ENCODE measurements at regions of chrX and their contacts with region 1.

Region 1: DNA sequence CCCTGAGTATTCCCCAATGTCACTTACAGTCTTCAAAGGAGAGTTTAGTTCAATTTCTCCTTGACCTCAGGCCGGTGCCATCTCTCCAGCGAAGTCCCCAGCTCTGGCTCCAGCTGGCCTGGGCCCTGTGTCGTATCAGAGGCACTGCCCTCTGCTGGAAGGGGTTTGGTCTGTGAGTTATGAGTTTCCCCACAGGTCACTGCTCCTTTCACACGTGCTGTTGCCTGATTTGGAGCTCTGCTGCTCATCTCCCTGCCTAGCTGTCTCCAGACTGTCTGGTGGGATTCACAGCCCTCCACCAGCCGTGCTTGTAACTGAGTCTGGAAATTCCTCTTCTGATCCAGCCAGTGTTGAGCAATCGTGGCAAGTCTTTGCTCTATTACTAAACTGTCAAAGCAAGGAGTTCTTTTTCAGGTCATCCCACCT is at the start of gene RAP2C:
- DNase-seq: peak; percentile 15 to 50 (median 32)
- ATAC-seq: peak; percentile 47
- H3K4me3 ChIP-seq: peak within 1 kb of the TSS; percentile 51
- H3K4me3 Mint-ChIP-seq: peak within 1 kb of the TSS; percentile 79 to 96 (median 88)
- H3K27ac ChIP-seq: peak within 1 kb of the TSS; percentile 94
- H3K27ac Mint-ChIP-seq: peak within 1 kb of the TSS; percentile 87 to 97 (median 94)
- H3K4me1 ChIP-seq: peaks cover 9 to 14% of the 10 kb centered on the region in 2 donors
- H3K4me1 Mint-ChIP-seq: peaks cover 7 to 35% (median 25%) of the 10 kb centered on the region in 7 donors
- H3K27me3 ChIP-seq: no peaks in the 10 kb centered on the region
- H3K27me3 Mint-ChIP-seq: no peaks in the 10 kb centered on the region
- total RNA-seq, gene RAP2C: 21.4 to 34.7 (median 30.3) TPM

Region 2: DNA sequence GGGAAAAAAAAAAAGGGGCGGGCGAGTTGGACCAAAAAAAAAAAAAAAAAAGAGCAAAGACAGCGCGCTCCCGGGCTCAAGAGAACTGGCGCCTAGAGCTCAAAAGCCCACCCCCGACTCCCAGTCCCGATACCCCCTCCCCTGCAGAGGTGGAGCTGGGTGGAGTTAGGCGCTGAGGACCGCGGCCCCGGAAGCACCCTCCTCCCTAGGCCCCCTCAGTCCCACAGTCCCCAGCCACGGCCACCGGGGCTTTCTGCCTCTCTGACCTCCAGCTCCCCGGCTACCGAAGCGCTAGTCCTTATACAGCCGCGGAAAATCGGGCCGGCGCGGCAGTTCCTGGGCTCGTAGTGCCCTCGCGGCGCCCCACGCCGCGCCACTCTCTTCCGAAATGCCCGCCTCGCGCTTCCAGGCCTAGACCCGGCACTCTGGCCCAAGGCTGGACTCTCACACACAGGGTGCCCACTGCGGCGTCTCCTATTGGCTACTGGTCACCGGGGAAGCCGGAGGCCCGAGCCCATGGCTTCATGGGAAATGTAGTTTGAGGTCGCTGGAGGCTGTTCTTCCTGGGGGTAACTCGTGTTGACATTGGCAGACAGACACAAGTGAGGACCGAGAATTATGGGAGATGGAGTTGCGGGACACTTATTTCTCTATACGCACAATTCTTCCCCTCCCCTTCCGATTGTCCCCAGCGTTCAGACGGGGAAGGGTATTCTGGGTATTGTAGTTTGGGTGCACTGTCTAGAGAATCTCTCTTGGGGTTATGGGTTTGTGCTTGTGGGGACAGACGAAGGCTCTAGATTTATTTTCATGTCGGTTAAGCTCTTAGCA is 1316.4 kb before region 1 on chrX and contains the start of gene ENOX2:
- CTCF ChIA-PET with region 1: no interaction called
- POLR2A ChIA-PET with region 1: interaction called, 4 read pairs
- intact Hi-C with region 1: loop called in 1 of 2 experiments (anchors 5 kb)
- DNase-seq: peak; percentile 51 to 90 (median 83)
- ATAC-seq: peak; percentile 98
- H3K4me3 ChIP-seq: peak within 1 kb of the TSS; percentile 79
- H3K4me3 Mint-ChIP-seq: no peak within 1 kb of the TSS
- H3K27ac ChIP-seq: peak within 1 kb of the TSS; percentile 93
- H3K27ac Mint-ChIP-seq: peak within 1 kb of the TSS in 6 of 9 donors; percentile 51 to 91 (median 71)
- H3K4me1 ChIP-seq: peaks cover 0 to 5% of the 10 kb centered on the region in 2 donors
- H3K4me1 Mint-ChIP-seq: peaks cover 5 to 14% (median 12%) of the 10 kb centered on the region in 7 donors
- H3K27me3 ChIP-seq: no peaks in the 10 kb centered on the region
- H3K27me3 Mint-ChIP-seq: no peaks in the 10 kb centered on the region
- total RNA-seq, gene ENOX2: 10.3 to 15.3 (median 12.1) TPM

Region 3: GRCh38 chrX:131830400-131831184 is 388.8 kb before region 1 on chrX:
- CTCF ChIA-PET with region 1: interaction called, 3 read pairs
- POLR2A ChIA-PET with region 1: no interaction called
- intact Hi-C with region 1: loop called (anchors 2 kb)
- DNase-seq: peak in 8 of 9 donors; percentile 59 to 83 (median 72)
- ATAC-seq: peak; percentile 76
- H3K4me3 ChIP-seq: peak overlapping the region; percentile 37
- H3K4me3 Mint-ChIP-seq: peak overlapping the region; percentile 61 to 90 (median 72)
- H3K27ac ChIP-seq: peak overlapping the region; percentile 55
- H3K27ac Mint-ChIP-seq: peak overlapping the region; percentile 42 to 91 (median 81)
- H3K4me1 ChIP-seq: peaks cover 0 to 14% of the 10 kb centered on the region in 2 donors
- H3K4me1 Mint-ChIP-seq: peaks cover 1 to 44% (median 35%) of the 10 kb centered on the region in 7 donors
- H3K27me3 ChIP-seq: no peaks in the 10 kb centered on the region
- H3K27me3 Mint-ChIP-seq: no peaks in the 10 kb centered on the region

Region 4: GRCh38 chrX:131854581-131854980 is 364.8 kb before region 1 on chrX:
- CTCF ChIA-PET with region 1: interaction called, 9 read pairs
- POLR2A ChIA-PET with region 1: no interaction called
- intact Hi-C with region 1: loop called in 1 of 2 experiments (anchors 1 kb)
- DNase-seq: peak in 5 of 9 donors; percentile 25 to 48 (median 36)
- ATAC-seq: no peak
- H3K4me3 ChIP-seq: no peak overlapping the region
- H3K4me3 Mint-ChIP-seq: no peak overlapping the region
- H3K27ac ChIP-seq: no peak overlapping the region
- H3K27ac Mint-ChIP-seq: peak overlapping the region in 1 of 9 donors; percentile 70
- H3K4me1 ChIP-seq: no peaks in the 10 kb centered on the region
- H3K4me1 Mint-ChIP-seq: no peaks in the 10 kb centered on the region
- H3K27me3 ChIP-seq: no peaks in the 10 kb centered on the region
- H3K27me3 Mint-ChIP-seq: no peaks in the 10 kb centered on the region

Region 5: DNA sequence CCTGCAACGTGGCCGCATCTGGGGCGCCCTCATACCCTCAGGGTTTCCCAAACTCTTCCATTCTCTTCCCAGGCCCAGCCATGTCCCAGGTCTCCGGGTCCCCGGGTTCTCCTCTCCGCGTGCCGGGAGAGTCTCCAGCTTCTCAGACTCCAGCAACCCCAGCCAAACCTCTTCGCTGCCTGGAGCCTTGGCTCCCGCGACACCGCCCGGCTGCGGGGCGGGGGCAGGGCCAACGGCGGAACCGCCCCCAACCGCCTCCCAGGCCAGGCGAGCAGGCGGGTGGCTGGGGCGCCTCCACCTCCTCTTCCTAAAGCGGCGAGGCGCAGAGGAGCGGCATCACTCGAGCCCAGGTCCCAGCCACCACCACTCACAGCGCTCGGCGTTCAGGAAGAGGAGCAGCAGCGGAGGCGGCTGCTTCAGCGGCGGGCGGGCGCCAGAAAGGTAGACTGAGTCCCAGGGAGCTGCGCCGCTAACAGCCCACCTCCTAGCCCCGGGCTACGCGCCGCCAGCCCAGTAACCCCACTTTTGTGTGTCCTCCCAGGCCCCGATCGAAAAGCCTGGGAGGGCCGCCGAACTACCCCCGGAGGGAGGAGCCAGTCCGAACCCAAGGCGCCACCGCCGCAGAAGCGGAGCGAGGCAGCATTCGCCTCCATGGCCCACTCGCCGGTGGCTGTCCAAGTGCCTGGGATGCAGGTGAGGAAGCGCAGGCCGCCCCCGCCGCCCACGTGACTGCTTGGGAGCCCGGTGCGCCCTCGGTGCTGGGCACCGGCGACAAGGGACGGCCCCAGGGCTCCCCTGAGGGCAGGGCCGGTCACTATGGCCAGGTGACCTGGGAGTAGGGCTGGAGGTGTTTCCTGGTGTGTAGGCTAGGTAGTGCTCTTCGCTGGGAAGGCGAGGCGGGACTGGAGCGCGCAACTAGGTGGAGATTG is 196.1 kb before region 1 on chrX and contains the start of gene STK26:
- CTCF ChIA-PET with region 1: interaction called, 5 read pairs
- POLR2A ChIA-PET with region 1: interaction called, 6 read pairs
- intact Hi-C with region 1: loop called (anchors 1 kb)
- DNase-seq: peak; percentile 55 to 83 (median 78)
- ATAC-seq: peak; percentile 93
- H3K4me3 ChIP-seq: peak within 1 kb of the TSS; percentile 72
- H3K4me3 Mint-ChIP-seq: peak within 1 kb of the TSS; percentile 90 to 98 (median 94)
- H3K27ac ChIP-seq: peak within 1 kb of the TSS; percentile 86
- H3K27ac Mint-ChIP-seq: peak within 1 kb of the TSS; percentile 71 to 95 (median 93)
- H3K4me1 ChIP-seq: peaks cover 15 to 19% of the 10 kb centered on the region in 2 donors
- H3K4me1 Mint-ChIP-seq: peaks cover 17 to 43% (median 39%) of the 10 kb centered on the region in 7 donors
- H3K27me3 ChIP-seq: no peaks in the 10 kb centered on the region
- H3K27me3 Mint-ChIP-seq: no peaks in the 10 kb centered on the region
- total RNA-seq, gene STK26: 29.7 to 50.1 (median 45.1) TPM

Region 6: GRCh38 chrX:132171478-132172260 is 47.7 kb before region 1 on chrX:
- CTCF ChIA-PET with region 1: no interaction called
- POLR2A ChIA-PET with region 1: no interaction called
- intact Hi-C with region 1: loop called in 1 of 2 experiments (anchors 5 kb)
- DNase-seq: no peak
- ATAC-seq: no peak
- H3K4me3 ChIP-seq: no peak overlapping the region
- H3K4me3 Mint-ChIP-seq: no peak overlapping the region
- H3K27ac ChIP-seq: no peak overlapping the region
- H3K27ac Mint-ChIP-seq: no peak overlapping the region
- H3K4me1 ChIP-seq: no peaks in the 10 kb centered on the region
- H3K4me1 Mint-ChIP-seq: no peaks in the 10 kb centered on the region
- H3K27me3 ChIP-seq: no peaks in the 10 kb centered on the region
- H3K27me3 Mint-ChIP-seq: peaks cover 0 to 7% (median 6%) of the 10 kb centered on the region in 5 donors

Region 7: DNA sequence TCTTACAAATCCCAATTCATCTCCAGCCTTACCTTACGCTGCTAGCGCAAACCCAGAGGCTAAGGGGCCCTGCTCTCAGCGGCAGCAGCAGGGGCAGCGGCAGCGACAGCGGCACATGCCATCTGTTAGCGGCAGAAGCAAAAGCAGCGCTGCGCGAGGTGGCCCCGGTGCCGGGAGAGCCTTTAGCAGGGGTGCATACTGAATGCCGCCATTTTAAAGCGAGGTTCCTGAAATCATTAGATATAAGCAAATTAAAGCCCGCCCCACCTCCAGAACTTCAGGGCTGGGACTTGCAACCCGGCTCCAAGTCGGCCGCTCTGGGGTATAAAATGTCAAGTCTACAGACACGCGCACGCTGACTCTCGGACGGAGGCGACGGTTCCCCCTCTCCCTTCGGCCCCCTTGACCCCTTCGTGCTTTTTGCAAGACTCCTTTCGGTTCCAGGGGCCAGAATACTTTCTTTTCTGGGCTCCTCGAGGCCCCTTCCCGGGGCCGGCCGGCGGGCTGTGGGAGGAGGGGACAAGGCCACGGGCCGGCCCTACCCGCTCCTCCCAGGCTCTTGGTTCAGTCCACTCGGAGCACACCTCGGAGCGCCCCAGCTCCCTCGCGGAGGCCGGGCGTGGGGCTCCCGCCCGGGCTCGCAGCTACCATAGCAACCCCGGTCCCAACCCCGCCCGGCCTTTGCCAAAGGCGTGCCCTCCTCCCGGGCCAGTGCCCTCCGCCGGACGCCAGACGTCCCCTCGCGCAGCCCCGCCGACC is 269.6 kb after region 1 on chrX and contains the start of gene MBNL3:
- CTCF ChIA-PET with region 1: interaction called, 3 read pairs
- POLR2A ChIA-PET with region 1: interaction called, 7 read pairs
- intact Hi-C with region 1: loop called (anchors 1 kb)
- DNase-seq: peak; percentile 35 to 78 (median 70)
- ATAC-seq: peak; percentile 77
- H3K4me3 ChIP-seq: peak within 1 kb of the TSS; percentile 82
- H3K4me3 Mint-ChIP-seq: peak within 1 kb of the TSS; percentile 93 to 99 (median 96)
- H3K27ac ChIP-seq: peak within 1 kb of the TSS; percentile 83
- H3K27ac Mint-ChIP-seq: peak within 1 kb of the TSS; percentile 78 to 98 (median 94)
- H3K4me1 ChIP-seq: peaks cover 4 to 15% of the 10 kb centered on the region in 2 donors
- H3K4me1 Mint-ChIP-seq: peaks cover 16 to 59% (median 44%) of the 10 kb centered on the region in 7 donors
- H3K27me3 ChIP-seq: no peaks in the 10 kb centered on the region
- H3K27me3 Mint-ChIP-seq: peaks cover 0 to 10% (median 0%) of the 10 kb centered on the region in 5 donors
- total RNA-seq, gene MBNL3: 20.8 to 34.0 (median 29.7) TPM